AG04450 (cell line): ENCODE measurements at regions of chr6 and their contacts with region 1.

Region 1: DNA sequence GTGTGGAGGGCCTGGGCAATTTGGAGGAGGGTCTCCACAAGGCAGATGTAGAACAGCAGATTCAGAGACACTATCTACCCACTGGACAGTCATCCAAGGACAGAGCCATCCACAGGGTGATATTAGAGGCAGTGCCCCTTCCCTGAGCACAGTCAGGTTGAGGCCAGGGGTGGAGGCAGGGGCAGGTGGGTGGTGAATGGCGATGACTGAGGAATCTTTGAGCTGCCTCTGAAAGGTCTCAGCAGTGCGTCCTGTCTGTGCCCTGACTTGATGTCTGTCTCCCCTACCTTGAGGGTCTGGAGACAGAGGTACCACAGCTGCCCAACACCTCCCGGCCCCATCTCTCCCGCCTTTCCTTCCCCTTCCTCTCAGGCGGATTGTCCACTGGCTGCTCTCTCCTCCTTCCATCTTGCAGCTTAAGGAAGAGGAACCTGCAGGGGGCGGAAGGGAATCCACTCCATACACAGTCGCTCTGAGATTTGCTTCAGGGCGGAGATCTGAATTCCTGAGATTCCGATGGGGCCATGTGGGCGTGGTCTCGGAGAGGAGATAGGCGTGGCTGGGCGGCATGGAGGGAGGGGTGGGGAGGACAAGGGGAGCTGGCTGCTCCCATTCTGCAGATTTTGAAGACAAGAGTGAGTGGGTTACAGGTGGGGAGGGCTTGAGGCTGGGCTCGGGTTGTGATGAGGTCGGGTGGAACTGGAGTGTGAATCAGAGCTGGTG is 1.7 kb downstream of the MUCL3 start:
- DNase-seq: peak; percentile 44
- H3K4me3 ChIP-seq: 0 out of 2 replicates have a peak overlapping the region, but pooled peaks have one; percentile 5
- H3K27ac ChIP-seq: no peak overlapping the region
- H3K27me3 ChIP-seq: peaks cover 51% of the 10 kb centered on the region
- CTCF ChIP-seq: peak; percentile 78

Region 2: DNA sequence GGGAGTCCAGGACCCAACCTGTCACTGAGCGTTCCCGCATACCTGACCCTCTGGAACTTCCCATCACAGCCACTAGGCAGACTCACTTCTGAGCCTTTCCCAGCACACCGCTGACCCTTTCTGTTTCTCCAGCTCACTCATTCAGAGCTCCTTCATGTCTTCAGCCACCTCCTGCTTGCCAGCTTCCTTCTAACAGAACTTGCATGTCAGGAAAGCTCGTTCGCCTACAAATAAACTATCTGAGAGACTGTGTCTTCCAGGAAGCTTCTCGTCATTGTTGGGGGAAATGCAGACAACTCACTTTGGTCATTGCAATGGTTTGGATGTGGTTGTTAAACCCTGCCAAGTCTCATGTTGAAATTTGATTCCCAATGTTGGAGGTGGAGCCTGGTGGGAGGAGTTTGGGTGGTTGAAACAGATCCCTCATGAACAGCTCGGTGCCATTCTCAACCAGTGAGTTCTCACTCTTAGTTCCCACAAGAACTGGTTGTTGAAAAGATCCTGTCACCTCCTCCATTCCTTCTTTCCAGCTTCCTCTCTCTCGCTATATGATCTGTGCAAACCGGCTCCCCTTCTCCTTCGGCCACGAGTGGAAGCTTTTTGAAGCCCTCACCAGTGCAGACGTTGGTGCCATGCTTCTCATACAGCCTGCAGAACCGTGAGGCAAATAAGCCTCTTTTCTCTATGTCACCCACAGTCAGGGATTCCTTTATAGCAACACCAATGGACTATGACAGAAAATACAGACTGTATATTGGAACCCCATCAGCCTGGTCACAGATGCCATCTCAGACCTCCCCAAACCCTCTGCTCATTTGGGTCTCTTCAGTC is 39.7 kb after region 1 on chr6:
- CTCF ChIA-PET with region 1: interaction called, 11 read pairs
- POLR2A ChIA-PET with region 1: interaction called, 6 read pairs
- DNase-seq: peak; percentile 39
- H3K4me3 ChIP-seq: peak overlapping the region; percentile 47
- H3K27ac ChIP-seq: peak overlapping the region; percentile 33
- H3K27me3 ChIP-seq: no peaks in the 10 kb centered on the region
- CTCF ChIP-seq: peak; percentile 39